Cardiac septum (tissue), 1 donor: ENCODE measurements at regions of chr18 and their contacts with region 1.

Region 1: DNA sequence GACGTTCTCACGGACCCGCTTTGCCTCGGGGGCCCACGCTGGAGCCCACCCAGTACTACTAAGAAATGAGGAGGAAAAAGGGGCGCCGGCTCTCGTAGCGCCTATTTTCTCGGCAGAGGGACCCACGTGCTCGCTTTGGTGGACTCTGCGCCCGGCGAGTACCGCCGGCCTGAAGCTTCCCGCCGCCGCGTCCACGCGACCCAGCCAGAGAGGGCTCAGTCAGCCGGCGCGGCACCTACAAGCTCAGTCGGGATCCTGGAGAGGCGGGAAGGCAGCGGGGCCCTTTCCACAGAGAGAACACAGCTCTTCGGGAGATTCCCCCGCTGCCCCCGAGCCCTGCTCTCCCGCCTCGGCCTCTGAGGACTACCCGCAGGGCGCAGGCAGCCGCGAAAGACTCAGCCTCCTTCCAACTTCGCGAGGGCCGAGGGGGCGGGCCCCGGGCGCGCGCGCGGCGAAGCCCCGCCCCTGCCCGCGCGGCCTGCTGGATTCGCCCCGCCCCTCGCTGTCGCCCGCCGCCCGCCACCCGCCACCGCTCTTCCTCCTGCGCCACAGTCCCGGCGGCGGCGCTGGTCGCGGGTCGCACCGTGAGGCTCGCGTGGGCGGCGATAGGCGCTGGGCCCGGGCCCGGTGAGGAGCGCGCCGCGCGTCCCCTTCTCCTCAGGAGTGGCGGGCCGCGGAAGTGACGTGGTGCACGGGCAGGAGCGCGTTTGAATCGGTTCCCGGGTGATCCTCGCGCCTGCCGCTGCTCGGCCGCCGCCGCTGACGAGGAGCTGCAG is at the start of gene SMCHD1:
- DNase-seq: peak; percentile 93
- total RNA-seq, gene SMCHD1: 34.8 TPM

Region 2: DNA sequence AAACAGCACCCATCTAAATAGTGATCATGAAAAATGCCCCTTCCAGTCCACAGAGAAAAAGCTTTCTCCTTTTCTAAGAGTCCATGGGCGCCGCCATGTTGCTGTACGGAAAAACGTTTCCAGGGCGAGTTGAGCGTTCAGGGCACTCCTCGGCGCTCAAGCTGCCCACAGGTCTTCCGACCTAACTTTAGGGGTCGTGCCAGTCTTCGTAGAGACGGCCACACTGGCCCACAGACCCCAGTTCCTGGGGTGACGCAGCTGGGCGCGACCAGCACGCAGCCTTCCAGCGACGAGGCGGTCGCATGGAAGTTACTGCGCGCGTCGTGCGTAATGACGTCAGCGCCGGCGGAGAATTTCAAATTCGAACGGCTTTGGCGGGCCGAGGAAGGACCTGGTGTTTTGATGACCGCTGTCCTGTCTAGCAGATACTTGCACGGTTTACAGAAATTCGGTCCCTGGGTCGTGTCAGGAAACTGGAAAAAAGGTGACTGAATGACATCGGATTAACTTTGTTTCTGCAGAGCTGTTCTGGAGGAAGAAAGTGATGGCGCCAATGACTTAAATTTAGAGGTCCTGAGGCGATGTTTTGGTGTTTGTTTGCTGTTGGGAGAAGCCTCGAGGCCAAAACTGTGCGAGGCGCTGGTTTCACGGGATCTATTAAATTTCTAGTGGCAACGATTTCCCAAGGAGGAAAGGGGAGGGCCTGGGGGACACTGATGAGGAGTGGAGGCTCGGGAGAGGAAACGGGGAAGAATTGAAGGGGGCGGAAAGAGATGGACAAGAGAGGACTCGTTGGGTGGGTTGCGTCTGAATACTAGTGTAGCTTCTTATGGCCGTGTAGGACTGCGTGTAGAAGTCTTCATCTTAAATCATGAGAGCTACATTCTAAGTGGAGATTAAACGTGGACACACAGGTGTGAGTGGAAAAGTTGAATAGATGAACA is 83.9 kb before region 1 on chr18 and contains the starts of genes METTL4 and NDC80:
- intact Hi-C with region 1: loop called (anchors 5 kb)
- DNase-seq: peak; percentile 94
- total RNA-seq, gene METTL4: 7.0 TPM
- total RNA-seq, gene NDC80: 0.57 TPM